GM12878 (cell line): ENCODE measurements at regions of chr6 and their contacts with region 1.

Region 1: DNA sequence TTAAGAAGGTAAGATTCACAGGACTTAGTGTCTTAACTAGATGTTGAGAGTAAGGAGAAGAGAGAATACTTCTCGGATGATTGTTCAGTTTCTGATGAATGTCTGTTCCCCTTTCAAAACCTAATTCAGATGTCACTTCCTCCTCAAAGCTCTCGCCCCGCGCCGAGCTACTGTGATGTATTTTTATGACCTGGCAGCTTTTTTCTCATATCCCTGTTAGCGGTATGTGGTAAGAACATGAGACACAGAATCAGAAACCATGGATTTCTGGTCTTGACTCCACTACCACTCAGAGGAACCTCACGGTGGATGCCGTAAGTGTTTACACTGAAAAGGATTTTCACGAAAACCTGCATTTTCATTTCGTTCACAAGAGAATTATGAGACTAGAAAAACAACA is 48.4 kb downstream of the CEP43 start:
- DNase-seq: peak; percentile 86
- ATAC-seq: peak; percentile 87
- H3K4me3 ChIP-seq: peak overlapping the region; percentile 36; the same call in 1 of the 2 replicates
- H3K27ac ChIP-seq: peak overlapping the region; percentile 89
- H3K4me1 ChIP-seq: peaks cover 36% of the 10 kb centered on the region
- H3K27me3 ChIP-seq: no peaks in the 10 kb centered on the region
- CTCF ChIP-seq: no peak
- EP300 ChIP-seq: peak; percentile 74 to 77; a peak in 3 of 4 replicates
- POLR2A ChIP-seq: no peak
- RAD21 ChIP-seq: no peak

Region 2: DNA sequence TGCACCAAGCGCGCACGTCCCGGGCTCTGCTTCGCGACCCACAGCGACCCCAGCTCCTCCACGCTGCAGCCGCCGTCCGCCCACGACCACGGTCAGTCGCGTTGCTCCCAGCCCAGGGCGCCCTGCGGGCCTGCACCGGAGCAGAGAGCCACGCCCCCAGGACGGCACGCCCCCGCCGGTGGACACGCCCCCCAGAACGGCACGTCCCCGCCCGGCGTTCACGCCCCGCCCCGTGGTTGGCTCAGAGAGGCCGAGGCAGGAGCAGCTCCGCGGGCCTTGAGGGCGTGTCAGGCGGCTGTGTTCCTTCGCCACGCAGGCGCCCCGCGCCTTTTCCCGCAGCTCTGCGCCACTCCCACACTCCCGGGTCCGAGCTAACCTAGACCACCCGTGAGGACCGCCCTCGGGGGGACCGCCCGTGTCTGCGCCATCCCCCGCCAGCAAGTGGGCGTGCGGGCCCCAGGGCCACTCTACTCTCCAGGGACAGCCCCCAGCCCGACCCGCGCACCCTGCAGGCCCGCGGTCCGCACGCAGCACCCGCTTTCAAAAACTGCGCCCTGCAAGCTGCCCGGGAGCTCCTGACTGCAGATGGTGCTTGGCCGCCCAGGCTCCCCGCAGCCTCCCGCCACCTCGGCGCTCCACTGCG is 91.0 kb before region 1 on chr6 and contains the start of gene RNASET2:
- CTCF ChIA-PET with region 1: interaction called, 4 read pairs
- POLR2A ChIA-PET with region 1: interaction called, 3 read pairs
- RAD21 ChIA-PET with region 1: interaction called, 6 read pairs
- SMC1A ChIA-PET with region 1: interaction called, 11 read pairs
- in situ Hi-C with region 1: no loop called
- intact Hi-C with region 1: loop called (anchors 5 kb)
- DNase-seq: no peak
- ATAC-seq: peak; percentile 83
- H3K4me3 ChIP-seq: peak within 1 kb of the TSS; percentile 94
- H3K27ac ChIP-seq: peak within 1 kb of the TSS; percentile 94
- H3K4me1 ChIP-seq: peaks cover 49% of the 10 kb centered on the region
- H3K27me3 ChIP-seq: no peaks in the 10 kb centered on the region
- CTCF ChIP-seq: no peak
- EP300 ChIP-seq: no peak
- POLR2A ChIP-seq: peak; percentile 91
- RAD21 ChIP-seq: no peak
- polyA plus RNA-seq, gene RNASET2: 5.5 to 17.8 TPM

Region 3: DNA sequence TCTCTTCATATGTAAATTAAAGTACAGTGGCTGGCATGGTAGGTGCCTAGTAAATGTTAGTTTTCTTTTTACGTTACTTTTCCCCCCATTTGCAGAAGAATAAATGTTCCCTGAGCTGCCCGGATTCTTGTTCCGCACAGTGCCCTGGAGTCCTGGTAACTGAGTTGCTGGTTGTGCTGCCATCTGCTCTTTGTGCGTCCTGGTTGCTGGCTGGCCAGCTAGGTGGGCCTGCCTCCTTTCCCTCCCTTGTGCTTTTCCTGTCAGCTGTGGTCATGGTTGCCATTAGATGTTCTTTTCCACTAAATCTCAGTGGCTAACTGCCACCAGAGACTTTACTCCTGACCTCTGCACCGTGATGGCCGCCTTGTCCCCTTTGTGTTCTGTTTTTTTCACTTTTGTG is 19.8 kb before region 1 on chr6:
- CTCF ChIA-PET with region 1: no interaction called
- POLR2A ChIA-PET with region 1: no interaction called
- RAD21 ChIA-PET with region 1: no interaction called
- SMC1A ChIA-PET with region 1: no interaction called
- in situ Hi-C with region 1: no loop called
- intact Hi-C with region 1: no loop called
- DNase-seq: no peak
- ATAC-seq: no peak
- H3K4me3 ChIP-seq: no peak overlapping the region
- H3K27ac ChIP-seq: no peak overlapping the region
- H3K4me1 ChIP-seq: no peaks in the 10 kb centered on the region
- H3K27me3 ChIP-seq: no peaks in the 10 kb centered on the region
- CTCF ChIP-seq: no peak
- EP300 ChIP-seq: no peak
- POLR2A ChIP-seq: no peak
- RAD21 ChIP-seq: no peak

Region 4: DNA sequence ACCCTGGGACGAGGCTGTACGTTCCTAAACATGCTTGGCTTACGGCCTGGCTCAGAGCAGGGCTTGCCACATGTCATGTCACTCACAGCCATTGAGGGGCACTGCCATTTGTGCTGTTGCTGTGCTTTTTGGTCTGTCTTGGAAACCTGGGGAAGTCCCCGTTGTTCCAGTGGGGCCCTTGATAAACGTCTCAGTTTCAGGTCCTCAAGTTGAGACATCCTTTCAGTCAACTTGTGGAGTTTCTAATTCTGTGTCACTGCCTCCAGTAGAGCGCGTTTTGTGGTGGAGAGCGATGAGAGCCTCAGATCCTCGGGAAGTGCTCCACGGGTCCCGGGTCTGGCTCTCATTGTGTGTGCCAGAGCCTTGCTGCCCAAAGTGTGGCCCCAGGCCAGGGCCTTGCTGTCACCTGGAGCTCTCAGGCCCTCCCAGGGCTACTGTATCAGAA is 32.3 kb after region 1 on chr6:
- CTCF ChIA-PET with region 1: no interaction called
- POLR2A ChIA-PET with region 1: no interaction called
- RAD21 ChIA-PET with region 1: interaction called, 13 read pairs
- SMC1A ChIA-PET with region 1: interaction called, 11 read pairs
- in situ Hi-C with region 1: no loop called
- intact Hi-C with region 1: no loop called
- DNase-seq: peak; percentile 93
- ATAC-seq: peak; percentile 99
- H3K4me3 ChIP-seq: no peak overlapping the region
- H3K27ac ChIP-seq: peak overlapping the region; percentile 79
- H3K4me1 ChIP-seq: peaks cover 31% of the 10 kb centered on the region
- H3K27me3 ChIP-seq: no peaks in the 10 kb centered on the region
- CTCF ChIP-seq: peak; percentile 70 to 81 (median 74)
- EP300 ChIP-seq: peak; percentile 64 to 84; a peak in 2 of 4 replicates
- POLR2A ChIP-seq: no peak
- RAD21 ChIP-seq: peak; percentile 83

Region 5: DNA sequence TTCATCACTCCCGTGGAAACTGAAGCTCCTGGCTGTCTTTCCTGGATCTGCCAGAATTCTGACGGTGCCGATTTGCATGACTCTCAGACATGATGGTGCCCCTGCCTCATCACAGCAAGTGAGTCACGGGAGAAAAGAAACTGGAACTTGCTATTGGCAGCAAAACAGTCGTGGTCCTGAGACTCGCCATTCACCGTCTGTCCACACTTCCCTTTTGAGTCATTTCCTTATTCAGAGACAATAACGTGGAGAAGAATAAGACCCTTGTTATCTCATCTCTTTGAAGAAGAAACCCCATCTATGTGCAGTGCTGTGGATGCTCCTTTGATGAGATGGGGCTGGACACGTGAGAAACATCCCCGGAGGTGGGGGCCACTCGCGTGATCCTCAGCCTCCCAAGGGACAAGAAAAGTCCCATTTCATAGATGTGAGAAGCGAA is 106.0 kb after region 1 on chr6:
- CTCF ChIA-PET with region 1: interaction called, 3 read pairs
- POLR2A ChIA-PET with region 1: no interaction called
- RAD21 ChIA-PET with region 1: interaction called, 7 read pairs
- SMC1A ChIA-PET with region 1: interaction called, 6 read pairs
- in situ Hi-C with region 1: no loop called
- intact Hi-C with region 1: loop called (anchors 2 kb)
- DNase-seq: peak; percentile 78
- ATAC-seq: peak; percentile 71
- H3K4me3 ChIP-seq: peak overlapping the region; percentile 54
- H3K27ac ChIP-seq: peak overlapping the region; percentile 70
- H3K4me1 ChIP-seq: peaks cover 30% of the 10 kb centered on the region
- H3K27me3 ChIP-seq: no peaks in the 10 kb centered on the region; a peak in 1 of 4 replicates
- CTCF ChIP-seq: no peak
- EP300 ChIP-seq: peak; percentile 81; a peak in 3 of 4 replicates
- POLR2A ChIP-seq: no peak
- RAD21 ChIP-seq: no peak

Region 6: GRCh38 chr6:167165858-167166471 is 118.4 kb after region 1 on chr6:
- CTCF ChIA-PET with region 1: no interaction called
- POLR2A ChIA-PET with region 1: no interaction called
- RAD21 ChIA-PET with region 1: no interaction called
- SMC1A ChIA-PET with region 1: no interaction called
- in situ Hi-C with region 1: no loop called
- intact Hi-C with region 1: no loop called
- DNase-seq: no peak
- ATAC-seq: peak; percentile 71
- H3K4me3 ChIP-seq: no peak overlapping the region
- H3K27ac ChIP-seq: no peak overlapping the region
- H3K4me1 ChIP-seq: no peaks in the 10 kb centered on the region
- H3K27me3 ChIP-seq: no peaks in the 10 kb centered on the region
- CTCF ChIP-seq: no peak
- EP300 ChIP-seq: no peak
- POLR2A ChIP-seq: no peak
- RAD21 ChIP-seq: no peak